ENCODE measurements at regions of chr20 and their contacts with region 1.

Region 1: DNA sequence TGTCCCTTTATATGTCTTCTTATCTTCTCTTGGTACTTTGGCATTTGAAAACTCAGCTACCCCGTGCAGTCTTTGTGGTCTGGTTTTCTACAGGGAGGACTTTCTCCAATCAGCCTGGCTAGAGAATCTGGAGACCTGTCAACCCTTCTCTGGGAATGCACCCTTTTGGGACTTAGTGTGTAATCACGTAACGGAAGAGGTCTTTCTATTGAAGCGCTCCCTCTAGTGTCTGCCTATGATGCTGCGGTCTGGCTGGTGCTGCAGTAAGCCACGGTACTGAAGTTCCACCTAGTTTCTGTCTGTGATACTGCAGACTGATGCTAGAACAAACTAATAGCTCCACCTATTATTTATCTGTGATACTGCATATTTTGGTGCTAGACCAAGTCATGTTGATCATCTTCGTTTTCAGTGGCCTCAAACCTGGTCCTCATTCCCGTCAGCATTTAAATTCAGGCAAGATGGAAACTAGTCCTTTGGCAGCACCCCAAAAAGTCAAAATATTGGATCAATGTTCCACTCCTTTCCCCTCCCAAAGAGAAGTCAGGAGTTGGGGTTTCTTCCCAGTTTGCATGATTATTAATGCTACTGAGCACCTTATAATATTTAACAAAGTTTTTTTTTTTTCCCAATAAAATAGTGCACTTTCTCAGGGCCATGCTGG is 12.5 kb upstream of the SIRPB2 start:
- DNase-seq: peak; percentile 77 to 82
- H3K4me3 ChIP-seq: no peak overlapping the region
- H3K27ac ChIP-seq: no peak overlapping the region
- H3K4me1 ChIP-seq: peaks cover 6 to 8% (median 8%) of the 10 kb centered on the region in 4 experiments; a peak in 6 of 7 replicates
- H3K27me3 ChIP-seq: no peaks in the 10 kb centered on the region; a peak in 1 of 7 replicates
- CTCF ChIP-seq: peak; percentile 87 to 100 (median 100)
- EP300 ChIP-seq: peak in 1 of 2 experiments; percentile 34; a peak in 1 of 3 replicates
- POLR2A ChIP-seq: no peak
- RAD21 ChIP-seq: peak; percentile 85 to 92

Region 2: DNA sequence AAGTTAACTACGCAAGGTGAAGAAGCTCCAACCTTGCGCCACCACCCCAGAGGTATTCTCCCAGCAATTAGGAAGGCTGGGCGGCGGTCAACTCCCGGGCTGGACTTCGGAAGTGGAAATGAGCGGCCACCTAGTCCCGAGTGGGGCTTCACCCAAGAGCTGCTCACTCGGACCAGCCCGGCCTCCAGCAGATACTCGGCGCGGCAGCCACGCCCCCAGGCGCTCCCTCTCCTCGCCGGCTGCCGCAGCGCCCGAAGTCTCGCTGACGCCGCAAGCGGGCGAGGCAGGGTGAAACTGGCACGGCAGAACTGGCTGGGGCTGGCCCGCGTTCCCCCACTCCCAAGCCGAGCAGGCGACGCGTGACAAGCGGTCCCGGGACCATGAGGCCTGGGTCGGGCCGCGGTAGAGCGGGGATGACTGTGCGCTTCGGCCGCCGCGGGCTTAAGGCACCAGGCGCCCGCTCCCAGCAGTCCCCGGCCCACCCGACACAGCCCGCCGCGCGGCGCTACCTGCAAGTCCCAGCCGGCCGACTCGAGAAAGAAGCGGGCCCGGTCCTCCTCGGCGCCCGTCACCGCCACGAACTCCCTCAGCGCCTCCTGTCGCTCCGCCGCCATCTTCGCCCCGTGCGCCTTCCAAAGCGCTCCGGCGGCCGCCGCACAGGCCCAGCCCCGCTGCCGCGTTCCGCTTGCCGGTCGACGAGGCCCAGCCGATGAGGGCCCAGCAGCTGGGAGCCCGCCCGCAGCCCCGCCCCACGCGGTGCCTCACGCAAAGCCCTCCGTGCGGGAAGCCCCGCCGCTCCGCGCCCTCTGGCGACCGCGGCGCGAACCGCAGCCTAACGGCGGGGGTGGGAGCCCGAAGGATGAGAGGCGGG is 37.2 kb before region 1 on chr20 and contains the start of gene NSFL1C:
- CTCF ChIA-PET with region 1: interaction called, 63 read pairs
- POLR2A ChIA-PET with region 1: interaction called, 4 read pairs
- DNase-seq: peak; percentile 88 to 99
- H3K4me3 ChIP-seq: peak within 1 kb of the TSS; percentile 76 to 96 (median 94)
- H3K27ac ChIP-seq: peak within 1 kb of the TSS; percentile 77
- H3K4me1 ChIP-seq: peaks cover 3 to 14% (median 6%) of the 10 kb centered on the region in 4 experiments; a peak in 6 of 7 replicates
- H3K27me3 ChIP-seq: no peaks in the 10 kb centered on the region
- CTCF ChIP-seq: peak; percentile 83 to 94 (median 92)
- EP300 ChIP-seq: peak in 1 of 2 experiments; percentile 92; a peak in 2 of 3 replicates
- POLR2A ChIP-seq: peak; percentile 66 to 87
- RAD21 ChIP-seq: peak; percentile 34 to 55; a peak in 3 of 4 replicates
- total RNA-seq, gene NSFL1C: 87.4 and 98.0 TPM in 2 replicates

Region 3: DNA sequence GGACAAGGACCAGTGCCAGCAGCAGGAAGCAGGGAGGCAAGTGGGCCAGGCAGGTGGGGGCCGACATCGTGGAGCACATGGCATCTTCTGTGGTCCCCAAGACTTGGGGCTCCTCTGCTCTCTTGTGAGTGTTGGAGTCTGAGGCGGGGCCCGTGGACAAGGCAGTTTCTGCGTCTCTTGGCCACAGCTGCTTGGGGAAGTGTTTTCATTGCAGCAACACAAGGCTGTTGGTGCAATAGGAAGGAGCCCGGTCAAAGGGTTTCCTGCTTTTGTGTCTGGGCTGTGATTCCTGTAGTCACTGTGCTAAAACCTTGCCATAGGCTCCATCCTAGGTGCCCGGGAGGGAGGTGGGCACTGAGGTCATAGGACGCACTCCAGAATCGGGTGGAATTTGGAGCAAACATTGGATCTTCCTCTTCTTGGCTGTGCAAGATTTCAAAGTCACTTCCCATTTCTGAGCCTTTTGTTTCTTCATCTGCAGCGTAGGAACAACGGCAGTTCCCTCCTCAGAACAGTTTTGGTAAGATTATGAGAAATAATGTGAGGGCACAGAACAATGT is 12.3 kb before region 1 on chr20 and contains the start of gene SIRPB2:
- CTCF ChIA-PET with region 1: interaction called, 31 read pairs
- POLR2A ChIA-PET with region 1: interaction called, 7 read pairs
- DNase-seq: no peak
- H3K4me3 ChIP-seq: no peak within 1 kb of the TSS
- H3K27ac ChIP-seq: no peak within 1 kb of the TSS
- H3K4me1 ChIP-seq: no peaks in the 10 kb centered on the region
- H3K27me3 ChIP-seq: peaks cover 0 to 4% (median 1%) of the 10 kb centered on the region in 4 experiments; a peak in 2 of 7 replicates
- CTCF ChIP-seq: no peak
- EP300 ChIP-seq: no peak
- POLR2A ChIP-seq: no peak
- RAD21 ChIP-seq: no peak
- total RNA-seq, gene SIRPB2: 0.28 TPM in 1 of 2 replicates, not detected in the other

Region 4: GRCh38 chr20:1533059-1533458 is 29.4 kb after region 1 on chr20:
- CTCF ChIA-PET with region 1: interaction called, 15 read pairs
- POLR2A ChIA-PET with region 1: no interaction called
- DNase-seq: peak in 1 of 2 experiments; percentile 7
- H3K4me3 ChIP-seq: no peak overlapping the region
- H3K27ac ChIP-seq: no peak overlapping the region
- H3K4me1 ChIP-seq: no peaks in the 10 kb centered on the region
- H3K27me3 ChIP-seq: no peaks in the 10 kb centered on the region
- CTCF ChIP-seq: peak in 2 of 3 experiments; percentile 49; a peak in 3 of 4 replicates
- EP300 ChIP-seq: no peak
- POLR2A ChIP-seq: no peak
- RAD21 ChIP-seq: peak; percentile 69 to 74

Region 5: DNA sequence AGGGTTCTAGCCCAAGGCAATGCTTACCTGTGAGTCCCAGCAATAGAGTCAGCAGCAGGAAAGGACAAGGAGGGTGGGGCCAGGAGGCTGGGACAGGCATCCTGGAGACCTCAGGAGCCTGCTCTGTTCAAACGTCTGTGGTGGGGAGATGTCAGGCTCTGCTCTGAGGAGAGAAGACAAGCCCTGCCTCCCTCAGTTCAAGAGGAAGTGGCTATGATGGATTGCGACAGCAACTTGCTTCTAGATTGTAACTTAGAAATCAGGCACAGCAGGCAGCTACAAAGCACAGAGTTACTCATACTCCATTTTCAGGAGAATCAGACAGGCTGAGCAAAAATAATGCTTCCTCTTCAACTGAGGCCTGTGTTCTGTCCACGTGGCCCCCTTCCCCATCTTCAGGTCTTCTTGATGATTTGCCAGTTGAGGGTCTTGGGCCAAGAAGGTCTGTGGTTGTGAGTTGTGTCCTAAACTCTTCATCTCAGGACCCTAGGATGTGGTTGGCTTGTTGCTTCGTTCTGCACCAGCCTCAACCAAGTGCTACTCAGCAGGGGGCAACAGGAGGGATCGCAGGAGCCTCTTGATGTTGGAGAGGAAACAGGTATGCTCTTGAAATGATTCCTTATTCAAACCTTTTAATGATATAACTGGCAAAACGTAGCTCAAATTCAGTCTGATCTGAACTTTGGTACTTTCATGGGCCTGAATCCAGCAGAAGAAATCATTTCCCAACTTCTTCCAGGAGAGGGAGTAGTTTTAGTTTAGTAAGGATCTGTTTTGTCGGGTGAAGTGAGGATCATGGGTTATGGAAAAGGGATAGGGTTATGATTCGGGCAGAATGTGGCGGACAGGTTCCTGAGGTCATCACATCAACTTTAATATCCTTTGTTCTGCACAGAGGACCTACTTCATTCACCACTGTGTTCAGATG is 85.1 kb after region 1 on chr20:
- CTCF ChIA-PET with region 1: no interaction called
- POLR2A ChIA-PET with region 1: no interaction called
- DNase-seq: no peak
- H3K4me3 ChIP-seq: no peak overlapping the region
- H3K27ac ChIP-seq: no peak overlapping the region
- H3K4me1 ChIP-seq: no peaks in the 10 kb centered on the region
- H3K27me3 ChIP-seq: no peaks in the 10 kb centered on the region
- CTCF ChIP-seq: peak in 1 of 3 experiments; percentile 31; a peak in 1 of 4 replicates
- EP300 ChIP-seq: no peak
- POLR2A ChIP-seq: no peak
- RAD21 ChIP-seq: peak; percentile 30 to 40; a peak in 3 of 4 replicates

Region 6: DNA sequence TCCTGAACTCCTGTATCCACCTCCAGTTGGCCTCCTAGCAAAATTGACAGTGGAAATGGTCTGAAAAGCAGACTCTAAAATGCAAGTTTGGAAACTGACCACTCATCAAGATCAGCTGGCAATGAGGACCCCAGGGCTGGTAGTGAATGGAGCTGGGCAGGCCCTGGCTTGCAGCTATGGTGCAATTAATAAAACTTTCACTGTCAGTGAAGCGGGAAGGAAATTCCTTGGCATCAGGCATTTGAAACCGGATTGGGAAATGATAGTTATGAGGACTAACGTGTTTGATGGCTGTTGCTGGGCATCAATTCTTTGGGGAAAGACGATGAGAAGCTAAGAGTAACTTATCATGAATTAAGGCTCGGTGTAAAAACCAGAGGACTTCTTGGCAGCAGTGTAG is 97.0 kb after region 1 on chr20:
- CTCF ChIA-PET with region 1: no interaction called
- POLR2A ChIA-PET with region 1: no interaction called
- DNase-seq: no peak
- H3K4me3 ChIP-seq: no peak overlapping the region
- H3K27ac ChIP-seq: no peak overlapping the region
- H3K4me1 ChIP-seq: no peaks in the 10 kb centered on the region
- H3K27me3 ChIP-seq: no peaks in the 10 kb centered on the region
- CTCF ChIP-seq: no peak
- EP300 ChIP-seq: no peak
- POLR2A ChIP-seq: no peak
- RAD21 ChIP-seq: no peak